ENCODE measurements at regions of chr16 and their contacts with region 1.

Region 1: GRCh38 chr16:4288148-4288921 is 15.5 kb upstream of the TFAP4 start:
- DNase-seq: peak; percentile 85
- ATAC-seq: peak; percentile 98
- H3K4me3 Mint-ChIP-seq: no peak overlapping the region
- H3K27ac Mint-ChIP-seq: no peak overlapping the region
- H3K4me1 Mint-ChIP-seq: peaks cover 11% of the 10 kb centered on the region
- H3K27me3 Mint-ChIP-seq: peaks cover 2% of the 10 kb centered on the region

Region 2: GRCh38 chr16:4277987-4278513 is 10.3 kb before region 1 on chr16:
- CTCF ChIA-PET with region 1: interaction called, 10 read pairs
- POLR2A ChIA-PET with region 1: interaction called, 3 read pairs
- DNase-seq: no peak
- ATAC-seq: no peak
- H3K4me3 Mint-ChIP-seq: no peak overlapping the region
- H3K27ac Mint-ChIP-seq: no peak overlapping the region
- H3K4me1 Mint-ChIP-seq: peaks cover 3% of the 10 kb centered on the region
- H3K27me3 Mint-ChIP-seq: peaks cover 9% of the 10 kb centered on the region

Region 3: DNA sequence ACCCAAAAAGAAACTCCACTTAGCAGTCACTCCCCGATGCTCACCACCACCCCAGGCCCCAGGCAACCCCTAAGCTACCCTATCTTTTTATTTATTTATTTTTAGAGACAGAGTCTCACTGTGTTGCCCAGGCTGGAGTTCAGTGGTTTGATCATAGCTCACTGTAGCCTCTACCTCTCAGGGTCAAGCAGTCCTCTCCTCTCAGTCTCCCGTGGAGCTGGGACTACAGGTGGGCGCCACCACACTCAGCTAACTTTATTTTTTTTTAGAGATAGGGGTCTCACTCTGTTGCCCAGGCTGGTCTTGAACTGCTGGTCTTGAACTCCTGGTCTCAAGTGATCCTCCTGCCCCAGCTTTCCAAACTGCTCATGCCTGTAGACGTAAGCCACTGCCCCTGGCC is 12.8 kb after region 1 on chr16:
- CTCF ChIA-PET with region 1: interaction called, 25 read pairs
- POLR2A ChIA-PET with region 1: no interaction called
- DNase-seq: no peak
- ATAC-seq: no peak
- H3K4me3 Mint-ChIP-seq: no peak overlapping the region
- H3K27ac Mint-ChIP-seq: no peak overlapping the region
- H3K4me1 Mint-ChIP-seq: peaks cover 15% of the 10 kb centered on the region
- H3K27me3 Mint-ChIP-seq: no peaks in the 10 kb centered on the region

Region 4: GRCh38 chr16:4307215-4308037 is 19.1 kb after region 1 on chr16:
- CTCF ChIA-PET with region 1: interaction called, 25 read pairs
- POLR2A ChIA-PET with region 1: no interaction called
- DNase-seq: peak; percentile 97
- ATAC-seq: peak; percentile 96
- H3K4me3 Mint-ChIP-seq: peak overlapping the region; percentile 98
- H3K27ac Mint-ChIP-seq: peak overlapping the region; percentile 98
- H3K4me1 Mint-ChIP-seq: peaks cover 43% of the 10 kb centered on the region
- H3K27me3 Mint-ChIP-seq: no peaks in the 10 kb centered on the region

Region 5: DNA sequence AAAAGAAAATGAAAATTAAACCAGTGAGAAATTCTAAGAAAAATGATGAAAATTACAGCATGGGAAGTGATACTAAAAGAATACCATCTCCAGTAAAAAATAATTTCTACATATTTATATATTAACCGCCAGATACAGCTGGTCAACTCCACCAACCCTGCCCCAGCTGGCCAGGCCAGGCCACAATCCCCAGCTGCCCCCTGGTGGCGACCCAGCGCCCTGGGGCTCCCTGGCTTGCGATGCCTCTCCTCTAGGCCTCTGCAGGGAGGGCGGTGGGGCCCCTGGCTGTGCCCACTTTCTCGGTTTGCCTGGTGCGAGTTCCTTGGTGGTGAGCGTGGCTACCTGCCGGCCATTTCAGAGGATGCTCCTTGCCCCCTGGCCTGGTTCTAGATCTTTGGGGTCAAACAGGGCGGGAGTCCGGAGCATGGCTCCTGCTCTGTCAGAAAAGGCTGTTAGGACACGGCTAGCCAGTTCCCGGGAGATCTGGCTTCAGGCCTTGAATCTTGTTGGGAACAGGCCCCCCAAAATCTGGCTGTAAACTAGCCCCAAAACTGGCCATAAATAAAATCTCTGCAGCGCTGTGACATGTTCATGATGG is 42.0 kb after region 1 on chr16:
- CTCF ChIA-PET with region 1: interaction called, 35 read pairs
- POLR2A ChIA-PET with region 1: interaction called, 3 read pairs
- DNase-seq: peak; percentile 79
- ATAC-seq: peak; percentile 74
- H3K4me3 Mint-ChIP-seq: no peak overlapping the region
- H3K27ac Mint-ChIP-seq: no peak overlapping the region
- H3K4me1 Mint-ChIP-seq: peaks cover 9% of the 10 kb centered on the region
- H3K27me3 Mint-ChIP-seq: no peaks in the 10 kb centered on the region

Measured in activated CD8-positive, alpha-beta T cell treated with anti-CD3 and anti-CD28 coated beads, Interleukin-2, amount 10 ng/mL, durations not matched to agents 7 days and 5 days (primary cell).